ENCODE measurements at regions of chr1 and their contacts with region 1.

Region 1: DNA sequence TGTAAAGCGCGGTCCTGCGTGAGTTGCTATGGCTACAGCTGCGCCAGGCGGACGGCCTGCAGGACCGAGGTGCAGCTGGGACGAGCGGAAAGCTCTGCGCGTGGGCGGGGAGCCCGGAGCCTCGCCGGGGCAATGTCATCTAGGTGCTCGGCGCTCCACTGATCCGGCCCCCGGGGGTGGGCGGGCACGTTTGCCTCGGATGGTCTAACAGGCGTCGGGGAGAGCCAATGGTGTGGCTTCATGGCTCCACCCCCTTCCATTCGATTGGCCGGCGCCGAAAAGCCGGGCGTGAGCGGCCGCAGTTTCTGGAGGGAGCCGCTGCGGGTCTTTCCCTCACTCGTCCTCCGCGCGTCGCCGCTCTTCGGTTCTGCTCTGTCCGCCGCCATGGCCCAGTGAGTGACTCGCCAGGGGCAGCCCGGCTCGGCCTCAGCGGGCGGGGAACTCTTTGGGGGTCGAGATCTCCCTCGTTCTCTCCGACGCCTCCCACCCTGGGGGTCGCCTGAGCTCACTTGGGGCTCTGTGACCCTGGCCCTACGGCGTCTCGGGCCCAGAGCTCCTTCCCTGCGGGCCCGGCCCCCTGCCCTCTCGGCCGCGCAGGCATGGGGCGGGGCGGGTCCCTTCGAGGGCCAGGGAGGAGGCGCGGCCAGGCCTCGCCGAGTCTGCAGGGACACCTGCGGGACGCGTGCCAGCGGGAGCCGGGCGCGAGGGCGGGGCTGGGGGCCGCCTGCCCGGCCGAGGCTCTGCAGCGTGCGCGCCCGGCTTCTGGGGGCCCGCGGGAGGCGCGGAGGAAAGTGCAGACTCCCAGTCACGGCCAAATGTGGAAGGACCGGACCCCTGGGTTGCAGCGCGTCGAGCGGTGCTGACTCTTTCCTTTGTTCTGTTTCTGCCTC is at the start of gene PGD:
- DNase-seq: peak; percentile 95
- ATAC-seq: peak; percentile 94
- H3K4me3 Mint-ChIP-seq: peak within 1 kb of the TSS; percentile 92
- H3K27ac Mint-ChIP-seq: peak within 1 kb of the TSS; percentile 87
- H3K4me1 Mint-ChIP-seq: peaks cover 22% of the 10 kb centered on the region
- H3K27me3 Mint-ChIP-seq: no peaks in the 10 kb centered on the region
- CTCF ChIP-seq: no peak
- total RNA-seq, gene PGD: 108 and 112 TPM in 2 replicates

Region 2: GRCh38 chr1:10378081-10378841 is 20.7 kb before region 1 on chr1:
- CTCF ChIA-PET with region 1: interaction called, 3 read pairs
- POLR2A ChIA-PET with region 1: interaction called, 8 read pairs
- intact Hi-C with region 1: loop called (anchors 1 kb)
- DNase-seq: no peak
- ATAC-seq: no peak
- H3K4me3 Mint-ChIP-seq: no peak overlapping the region
- H3K27ac Mint-ChIP-seq: no peak overlapping the region
- H3K4me1 Mint-ChIP-seq: peaks cover 2% of the 10 kb centered on the region
- H3K27me3 Mint-ChIP-seq: no peaks in the 10 kb centered on the region
- CTCF ChIP-seq: no peak

Region 3: DNA sequence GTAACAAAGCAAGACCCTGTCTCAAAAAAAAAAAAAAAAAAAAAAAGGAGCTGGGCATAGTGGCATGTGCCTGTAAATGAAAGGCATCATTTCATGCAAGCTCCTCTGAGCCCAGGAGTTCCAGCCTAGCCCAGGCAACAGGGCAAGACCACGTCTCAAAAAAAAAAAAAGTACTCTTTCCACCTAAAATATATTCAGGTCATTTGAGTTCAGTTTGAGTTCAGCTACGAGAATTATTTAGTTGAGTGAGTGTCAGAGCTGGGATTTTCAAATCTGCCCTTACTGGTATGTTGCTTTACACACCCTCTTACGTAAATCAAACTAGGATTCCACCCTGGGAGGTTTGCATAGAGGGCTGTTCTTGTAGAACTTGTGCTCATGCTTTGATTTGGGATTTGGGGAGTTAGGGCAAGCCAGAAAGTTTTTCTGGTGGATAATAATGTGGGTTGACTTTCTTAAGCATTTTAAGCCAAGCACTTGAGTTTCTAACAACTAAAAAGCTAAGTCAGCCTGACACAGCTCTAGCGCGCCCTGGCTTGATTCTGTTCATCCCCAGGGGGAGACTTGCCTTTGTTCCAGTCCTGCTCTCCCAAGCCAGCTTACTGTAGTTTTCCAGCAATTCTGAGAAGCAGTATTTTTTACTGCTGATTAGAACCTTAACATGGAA is 11.4 kb before region 1 on chr1:
- CTCF ChIA-PET with region 1: interaction called, 9 read pairs
- POLR2A ChIA-PET with region 1: interaction called, 41 read pairs
- intact Hi-C with region 1: loop called (anchors 1 kb)
- DNase-seq: no peak
- ATAC-seq: peak; percentile 42
- H3K4me3 Mint-ChIP-seq: no peak overlapping the region
- H3K27ac Mint-ChIP-seq: no peak overlapping the region
- H3K4me1 Mint-ChIP-seq: peaks cover 12% of the 10 kb centered on the region
- H3K27me3 Mint-ChIP-seq: no peaks in the 10 kb centered on the region
- CTCF ChIP-seq: no peak

Region 4: GRCh38 chr1:10430216-10431069 is 31.5 kb after region 1 on chr1 and contains the start of gene CENPS:
- CTCF ChIA-PET with region 1: interaction called, 4 read pairs
- POLR2A ChIA-PET with region 1: interaction called, 8 read pairs
- intact Hi-C with region 1: loop called (anchors 1 kb)
- DNase-seq: peak; percentile 91
- ATAC-seq: peak; percentile 86
- H3K4me3 Mint-ChIP-seq: peak within 1 kb of the TSS; percentile 92
- H3K27ac Mint-ChIP-seq: peak within 1 kb of the TSS; percentile 96
- H3K4me1 Mint-ChIP-seq: peaks cover 28% of the 10 kb centered on the region
- H3K27me3 Mint-ChIP-seq: no peaks in the 10 kb centered on the region
- CTCF ChIP-seq: peak; percentile 57
- total RNA-seq, gene CENPS: 9.2 and 15.2 TPM in 2 replicates

Region 5: DNA sequence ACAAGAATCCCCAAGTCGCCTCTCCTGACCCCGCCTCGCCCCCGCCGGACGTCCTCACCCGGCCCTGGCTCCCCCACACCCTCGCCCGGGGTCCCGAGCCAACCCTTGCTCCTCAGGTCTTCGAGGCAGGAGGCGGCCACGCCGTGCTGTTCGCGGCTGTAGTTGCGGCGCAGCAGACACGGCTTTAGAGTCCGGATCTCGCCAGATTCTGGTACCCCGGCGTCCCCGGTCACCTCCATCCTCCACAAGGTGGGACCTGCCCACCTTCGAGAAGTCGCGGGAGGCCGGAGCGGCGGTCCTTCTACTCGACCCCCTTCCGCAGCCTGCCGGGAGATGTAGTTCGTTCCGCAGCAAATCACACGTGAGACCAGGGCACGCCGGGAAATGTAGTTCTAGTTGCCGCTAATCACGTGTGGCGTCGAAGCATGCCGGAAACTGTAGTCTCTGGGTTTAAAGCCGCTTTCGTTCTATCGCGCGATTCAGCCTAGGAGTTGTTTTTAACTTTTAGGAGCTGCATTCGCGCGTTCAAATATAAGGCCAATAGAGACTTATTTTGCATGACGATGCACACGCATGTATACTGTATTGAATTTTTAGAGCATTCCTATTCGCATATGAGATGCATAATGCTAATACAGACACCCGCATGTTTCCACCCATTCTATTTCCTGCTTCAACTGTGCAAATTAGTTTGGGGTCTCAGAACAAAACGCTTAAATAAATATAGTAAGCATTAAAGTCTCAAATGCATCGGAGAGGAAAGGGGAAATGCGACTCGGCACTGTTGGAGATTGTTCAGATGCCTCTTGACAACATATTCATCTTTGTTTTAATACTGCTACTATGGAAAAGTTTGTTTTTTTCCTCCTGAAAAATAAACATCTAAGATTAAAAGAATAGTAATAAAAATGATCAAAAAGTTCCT is 73.5 kb after region 1 on chr1 and contains the start of gene DFFA:
- CTCF ChIA-PET with region 1: no interaction called
- POLR2A ChIA-PET with region 1: interaction called, 3 read pairs
- intact Hi-C with region 1: loop called (anchors 1 kb)
- DNase-seq: peak; percentile 82
- ATAC-seq: peak; percentile 78
- H3K4me3 Mint-ChIP-seq: peak within 1 kb of the TSS; percentile 94
- H3K27ac Mint-ChIP-seq: peak within 1 kb of the TSS; percentile 90
- H3K4me1 Mint-ChIP-seq: peaks cover 51% of the 10 kb centered on the region
- H3K27me3 Mint-ChIP-seq: no peaks in the 10 kb centered on the region
- CTCF ChIP-seq: no peak
- total RNA-seq, gene DFFA: 34.3 and 39.0 TPM in 2 replicates

Measured in activated B cell treated with CpG ODN at 0.5 μM for 24 hours (primary cell).